ENCODE measurements at regions of chr1 and their contacts with region 1.

Region 1: DNA sequence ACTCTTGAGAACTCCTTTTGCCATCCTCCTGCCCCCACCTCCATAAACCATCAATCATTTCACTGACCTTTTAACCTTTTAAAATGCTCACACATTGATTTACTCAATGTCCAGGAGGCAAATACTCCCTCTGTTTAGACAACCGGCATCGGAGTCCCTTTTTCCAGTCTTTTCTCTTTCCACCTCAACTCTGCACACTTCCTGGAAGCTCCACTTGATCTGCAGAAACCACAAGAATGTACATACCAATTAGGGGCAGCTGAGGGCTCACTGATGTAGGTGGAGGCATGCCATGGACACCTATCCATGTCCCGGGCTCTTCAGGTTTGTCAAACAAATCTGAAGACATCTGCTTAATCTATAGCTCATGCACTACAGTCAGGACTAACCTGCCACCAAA is 5.3 kb upstream of the AMIGO1 start:
- DNase-seq: no peak
- ATAC-seq: no peak
- H3K4me3 ChIP-seq: no peak overlapping the region
- H3K4me3 Mint-ChIP-seq: no peak overlapping the region
- H3K27ac ChIP-seq: no peak overlapping the region
- H3K27ac Mint-ChIP-seq: no peak overlapping the region
- H3K4me1 ChIP-seq: peaks cover 22% of the 10 kb centered on the region
- H3K4me1 Mint-ChIP-seq: peaks cover 20% of the 10 kb centered on the region
- H3K27me3 ChIP-seq: no peaks in the 10 kb centered on the region
- H3K27me3 Mint-ChIP-seq: no peaks in the 10 kb centered on the region
- CTCF ChIP-seq: no peak

Region 2: GRCh38 chr1:109499661-109500536 is 14.9 kb before region 1 on chr1:
- CTCF ChIA-PET with region 1: interaction called, 681 read pairs
- POLR2A ChIA-PET with region 1: interaction called, 59 read pairs
- intact Hi-C with region 1: loop called in 1 of 2 experiments (anchors 1 kb)
- DNase-seq: peak; percentile 34 to 81 (median 74)
- ATAC-seq: peak; percentile 16
- H3K4me3 ChIP-seq: no peak overlapping the region
- H3K4me3 Mint-ChIP-seq: peak overlapping the region; percentile 63
- H3K27ac ChIP-seq: peak overlapping the region; percentile 85 to 94
- H3K27ac Mint-ChIP-seq: peak overlapping the region; percentile 97
- H3K4me1 ChIP-seq: peaks cover 94% of the 10 kb centered on the region
- H3K4me1 Mint-ChIP-seq: peaks cover 89% of the 10 kb centered on the region
- H3K27me3 ChIP-seq: no peaks in the 10 kb centered on the region
- H3K27me3 Mint-ChIP-seq: no peaks in the 10 kb centered on the region
- CTCF ChIP-seq: peak; percentile 59

Region 3: GRCh38 chr1:109564194-109564878 is 49.5 kb after region 1 on chr1:
- CTCF ChIA-PET with region 1: no interaction called
- POLR2A ChIA-PET with region 1: no interaction called
- intact Hi-C with region 1: no loop called
- DNase-seq: no peak
- ATAC-seq: no peak
- H3K4me3 ChIP-seq: no peak overlapping the region
- H3K4me3 Mint-ChIP-seq: no peak overlapping the region
- H3K27ac ChIP-seq: no peak overlapping the region
- H3K27ac Mint-ChIP-seq: no peak overlapping the region
- H3K4me1 ChIP-seq: peaks cover 44% of the 10 kb centered on the region
- H3K4me1 Mint-ChIP-seq: peaks cover 63% of the 10 kb centered on the region
- H3K27me3 ChIP-seq: no peaks in the 10 kb centered on the region
- H3K27me3 Mint-ChIP-seq: no peaks in the 10 kb centered on the region
- CTCF ChIP-seq: no peak

Measured in CD8-positive, alpha-beta T cell (primary cell).